ENCODE measurements at regions of chrX and their contacts with region 1.

Region 1: DNA sequence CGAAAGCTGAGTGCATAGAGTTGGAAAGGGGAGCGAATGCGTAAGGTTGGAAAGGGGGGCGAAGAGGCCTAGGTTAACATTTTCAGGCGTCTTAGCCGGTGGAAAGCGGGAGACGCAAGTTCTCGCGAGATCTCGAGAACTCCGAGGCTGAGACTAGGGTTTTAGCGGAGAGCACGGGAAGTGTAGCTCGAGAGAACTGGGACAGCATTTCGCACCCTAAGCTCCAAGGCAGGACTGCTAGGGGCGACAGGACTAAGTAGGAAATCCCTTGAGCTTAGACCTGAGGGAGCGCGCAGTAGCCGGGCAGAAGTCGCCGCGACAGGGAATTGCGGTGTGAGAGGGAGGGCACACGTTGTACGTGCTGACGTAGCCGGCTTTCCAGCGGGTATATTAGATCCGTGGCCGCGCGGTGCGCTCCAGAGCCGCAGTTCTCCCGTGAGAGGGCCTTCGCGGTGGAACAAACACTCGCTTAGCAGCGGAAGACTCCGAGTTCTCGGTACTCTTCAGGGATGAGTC is at the start of gene DDX3X:
- DNase-seq: peak; percentile 80 to 91
- ATAC-seq: peak; percentile 54 to 77 (median 65)
- H3K4me3 ChIP-seq: peak within 1 kb of the TSS; percentile 100
- H3K4me3 Mint-ChIP-seq: peak within 1 kb of the TSS; percentile 100
- H3K27ac ChIP-seq: peak within 1 kb of the TSS; percentile 99
- H3K27ac Mint-ChIP-seq: peak within 1 kb of the TSS; percentile 98 to 100
- H3K4me1 ChIP-seq: peaks cover 23% of the 10 kb centered on the region
- H3K4me1 Mint-ChIP-seq: peaks cover 53 to 79% of the 10 kb centered on the region in 2 donors
- H3K27me3 ChIP-seq: no peaks in the 10 kb centered on the region
- H3K27me3 Mint-ChIP-seq: no peaks in the 10 kb centered on the region
- CTCF ChIP-seq: no peak
- total RNA-seq, gene DDX3X: 695 to 1,297 (median 1,054) TPM

Region 2: DNA sequence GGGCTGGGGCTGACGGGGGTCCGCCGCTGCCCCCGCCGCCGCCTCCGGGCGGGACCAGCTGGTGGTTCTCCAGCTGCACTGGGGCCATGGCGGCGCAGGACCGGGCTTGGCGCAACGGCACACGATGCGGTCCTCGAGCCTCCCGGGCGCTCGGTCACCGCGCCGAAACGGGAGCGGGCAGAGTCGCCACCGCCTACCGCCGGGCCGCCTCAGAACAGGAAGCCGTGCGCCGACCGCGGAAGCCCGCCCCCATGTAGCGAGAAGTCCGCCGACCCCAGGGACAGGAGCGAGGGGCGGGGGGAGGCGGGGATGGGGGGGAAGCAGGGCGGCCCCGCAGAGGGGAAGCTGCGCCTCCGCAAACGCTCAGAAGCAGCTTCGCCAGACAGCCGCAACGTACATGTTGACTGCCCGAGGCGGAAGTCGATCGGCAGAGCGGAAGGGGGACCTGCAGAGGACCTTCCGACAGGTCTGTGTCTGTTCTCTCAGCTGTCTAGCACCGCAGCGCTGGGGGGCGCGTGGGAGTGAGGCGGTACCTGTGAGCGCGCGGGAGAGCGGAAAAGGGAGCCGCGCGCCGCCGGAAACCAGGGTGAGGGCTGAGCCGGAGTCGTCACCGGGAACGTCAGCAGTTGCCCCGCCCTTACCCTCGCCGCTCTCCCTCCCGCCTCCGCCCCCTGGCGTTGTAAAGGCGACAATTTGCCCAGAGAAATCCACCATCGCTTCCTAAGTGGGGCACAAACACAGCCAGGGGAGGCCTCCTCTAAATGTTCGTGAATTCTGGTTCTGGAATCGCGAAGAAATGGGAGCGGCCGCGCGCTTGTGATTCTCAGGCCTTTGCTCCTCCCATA is 598.3 kb before region 1 on chrX and contains the start of gene MED14:
- intact Hi-C with region 1: loop called (anchors 5 kb)
- DNase-seq: peak; percentile 80 to 94
- ATAC-seq: peak; percentile 84 to 95 (median 84)
- H3K4me3 ChIP-seq: peak within 1 kb of the TSS; percentile 61
- H3K4me3 Mint-ChIP-seq: peak within 1 kb of the TSS; percentile 98
- H3K27ac ChIP-seq: peak within 1 kb of the TSS; percentile 96
- H3K27ac Mint-ChIP-seq: peak within 1 kb of the TSS; percentile 96 to 98
- H3K4me1 ChIP-seq: peaks cover 14% of the 10 kb centered on the region
- H3K4me1 Mint-ChIP-seq: peaks cover 30 to 40% of the 10 kb centered on the region in 2 donors
- H3K27me3 ChIP-seq: no peaks in the 10 kb centered on the region
- H3K27me3 Mint-ChIP-seq: peaks cover 0 to 13% of the 10 kb centered on the region in 2 donors
- CTCF ChIP-seq: peak; percentile 31
- total RNA-seq, gene MED14: 55.3 to 79.1 (median 66.1) TPM

Region 3: DNA sequence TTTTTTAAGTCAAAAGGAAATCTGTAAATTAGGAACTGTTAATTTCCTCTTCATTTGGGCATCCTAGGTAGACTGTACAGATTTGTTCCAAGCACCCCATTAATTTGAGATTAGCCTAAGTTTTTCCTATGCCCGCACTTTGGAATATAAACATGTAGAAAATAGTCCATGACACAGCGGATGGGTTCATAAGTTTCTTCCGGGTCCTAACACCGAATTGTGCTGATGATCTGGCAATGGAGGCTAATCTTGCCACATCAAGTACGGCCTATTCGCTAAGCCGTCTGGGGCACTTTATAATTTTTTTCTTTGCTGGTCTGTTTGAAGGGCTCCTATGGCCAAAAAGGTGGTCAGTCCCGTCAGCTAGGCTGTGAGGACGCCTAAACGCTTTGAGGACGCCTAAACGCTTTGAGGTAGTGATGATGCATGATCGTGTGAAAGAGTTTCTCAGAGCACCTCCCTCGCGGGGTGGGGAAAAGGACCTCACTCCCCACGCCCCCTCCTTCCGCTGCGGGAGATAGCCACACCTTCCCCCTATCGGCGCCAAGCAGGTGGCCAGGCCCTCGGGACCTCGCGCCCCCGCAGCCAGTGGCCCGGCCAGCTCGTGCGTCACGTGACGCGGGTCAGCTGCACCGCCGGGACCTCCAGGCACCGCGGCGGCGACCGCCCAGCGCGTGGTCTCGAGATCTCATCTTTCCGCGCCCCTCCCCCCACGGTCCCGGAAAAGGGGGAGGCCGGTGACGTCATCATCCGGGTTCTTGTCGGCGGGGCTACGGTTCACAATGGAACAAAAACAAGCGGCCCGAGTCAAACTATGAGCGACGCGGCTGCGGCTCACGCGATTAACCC is 249.5 kb before region 1 on chrX:
- intact Hi-C with region 1: loop called (anchors 2 kb)
- DNase-seq: peak; percentile 96 to 97
- ATAC-seq: peak; percentile 69 to 85 (median 70)
- H3K4me3 ChIP-seq: peak overlapping the region; percentile 96
- H3K4me3 Mint-ChIP-seq: peak overlapping the region; percentile 93
- H3K27ac ChIP-seq: peak overlapping the region; percentile 100
- H3K27ac Mint-ChIP-seq: peak overlapping the region; percentile 95 to 97
- H3K4me1 ChIP-seq: peaks cover 5% of the 10 kb centered on the region
- H3K4me1 Mint-ChIP-seq: peaks cover 15 to 44% of the 10 kb centered on the region in 2 donors
- H3K27me3 ChIP-seq: no peaks in the 10 kb centered on the region
- H3K27me3 Mint-ChIP-seq: peaks cover 0 to 13% of the 10 kb centered on the region in 2 donors
- CTCF ChIP-seq: no peak

Region 4: GRCh38 chrX:41180194-41180908 is 153.5 kb before region 1 on chrX:
- intact Hi-C with region 1: loop called (anchors 10 kb)
- DNase-seq: peak; percentile 26 to 76
- ATAC-seq: peak; percentile 76 to 80 (median 78)
- H3K4me3 ChIP-seq: no peak overlapping the region
- H3K4me3 Mint-ChIP-seq: no peak overlapping the region
- H3K27ac ChIP-seq: peak overlapping the region; percentile 52
- H3K27ac Mint-ChIP-seq: peak overlapping the region; percentile 73 to 78
- H3K4me1 ChIP-seq: peaks cover 2% of the 10 kb centered on the region
- H3K4me1 Mint-ChIP-seq: peaks cover 31 to 34% of the 10 kb centered on the region in 2 donors
- H3K27me3 ChIP-seq: no peaks in the 10 kb centered on the region
- H3K27me3 Mint-ChIP-seq: no peaks in the 10 kb centered on the region
- CTCF ChIP-seq: peak; percentile 47

Region 5: GRCh38 chrX:41441934-41442823 is 108.4 kb after region 1 on chrX:
- intact Hi-C with region 1: loop called (anchors 5 kb)
- DNase-seq: peak; percentile 81 to 90
- ATAC-seq: peak; percentile 92 to 98 (median 94)
- H3K4me3 ChIP-seq: peak overlapping the region; percentile 37
- H3K4me3 Mint-ChIP-seq: peak overlapping the region; percentile 66
- H3K27ac ChIP-seq: peak overlapping the region; percentile 55
- H3K27ac Mint-ChIP-seq: peak overlapping the region; percentile 63 to 88
- H3K4me1 ChIP-seq: peaks cover 16% of the 10 kb centered on the region
- H3K4me1 Mint-ChIP-seq: peaks cover 5% of the 10 kb centered on the region in 2 donors
- H3K27me3 ChIP-seq: no peaks in the 10 kb centered on the region
- H3K27me3 Mint-ChIP-seq: peaks cover 0 to under 1% of the 10 kb centered on the region in 2 donors
- CTCF ChIP-seq: peak; percentile 52

Region 6: GRCh38 chrX:41561045-41561444 is 227.2 kb after region 1 on chrX:
- intact Hi-C with region 1: loop called (anchors 5 kb)
- DNase-seq: peak in 1 of 2 donors; percentile 65
- ATAC-seq: peak; percentile 80 to 90 (median 82)
- H3K4me3 ChIP-seq: no peak overlapping the region
- H3K4me3 Mint-ChIP-seq: peak overlapping the region; percentile 48
- H3K27ac ChIP-seq: peak overlapping the region; percentile 29
- H3K27ac Mint-ChIP-seq: peak overlapping the region; percentile 49 to 78
- H3K4me1 ChIP-seq: peaks cover 15% of the 10 kb centered on the region
- H3K4me1 Mint-ChIP-seq: peaks cover 22 to 28% of the 10 kb centered on the region in 2 donors
- H3K27me3 ChIP-seq: no peaks in the 10 kb centered on the region
- H3K27me3 Mint-ChIP-seq: no peaks in the 10 kb centered on the region
- CTCF ChIP-seq: no peak